Adrenal gland (tissue), 19 donors: ENCODE measurements at regions of chr13 and their contacts with region 1.

Region 1: DNA sequence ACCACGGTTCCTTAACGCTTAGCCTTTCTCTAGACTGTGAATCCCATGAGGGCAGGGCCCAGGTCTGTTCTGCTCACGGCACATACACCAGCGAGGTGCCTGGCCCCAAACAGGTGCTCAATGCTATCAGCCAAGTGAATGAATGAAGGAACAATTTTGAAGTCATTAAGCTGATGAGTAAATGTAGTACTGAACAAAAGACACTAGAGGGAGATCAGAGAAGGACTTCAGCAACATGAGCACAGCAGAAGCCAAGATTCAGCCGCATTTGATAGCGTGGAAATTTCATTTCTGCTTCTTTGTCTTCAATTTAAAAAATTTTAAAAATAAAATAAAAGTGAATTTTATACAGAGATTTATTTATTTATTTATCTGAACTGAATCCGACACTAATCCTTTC is 20.1 kb upstream of the MYO16 start:
- DNase-seq: no peak
- H3K4me3 ChIP-seq: no peak overlapping the region
- H3K27ac ChIP-seq: no peak overlapping the region
- H3K4me1 ChIP-seq: peaks cover 0 to 3% of the 10 kb centered on the region in 2 donors
- H3K27me3 ChIP-seq: no peaks in the 10 kb centered on the region
- CTCF ChIP-seq: peak in 2 of 6 experiments; percentile 19 to 23
- POLR2A ChIP-seq: no peak

Region 2: DNA sequence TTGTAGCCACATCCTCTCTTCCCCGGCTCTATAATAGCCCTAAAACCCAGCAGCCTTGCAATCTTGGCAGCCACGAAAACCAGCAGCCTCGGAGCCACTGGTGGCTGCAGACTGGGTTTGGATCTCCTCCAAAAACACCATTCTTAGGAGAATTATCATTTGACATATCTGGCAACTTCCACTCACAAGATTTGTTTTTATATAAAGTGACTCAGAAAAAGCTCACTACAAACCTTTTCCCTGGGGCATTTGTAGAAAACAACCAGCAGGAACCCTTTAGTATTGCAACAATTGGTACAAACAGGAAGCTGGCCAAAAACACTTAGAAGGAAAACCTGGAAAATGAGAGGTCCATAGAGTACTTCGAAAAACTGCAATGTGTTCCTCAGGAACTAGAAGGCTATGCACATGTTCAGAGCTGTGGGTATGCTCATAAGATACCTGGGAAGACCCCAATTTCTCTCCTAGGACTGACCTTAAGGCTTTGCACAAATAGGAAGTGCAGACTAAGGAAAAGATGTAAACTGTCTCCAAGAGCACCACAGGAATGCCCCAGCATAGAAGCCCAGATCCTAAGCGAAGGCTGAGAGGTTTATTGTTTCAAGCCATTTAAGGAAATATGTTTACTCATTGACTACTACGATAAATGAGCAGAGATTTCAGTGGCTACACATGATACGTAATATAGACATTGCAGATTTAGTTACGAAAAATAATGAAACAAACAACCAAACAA is 91.2 kb after region 1 on chr13:
- intact Hi-C with region 1: no loop called
- DNase-seq: no peak
- H3K4me3 ChIP-seq: no peak overlapping the region
- H3K27ac ChIP-seq: no peak overlapping the region
- H3K4me1 ChIP-seq: no peaks in the 10 kb centered on the region
- H3K27me3 ChIP-seq: no peaks in the 10 kb centered on the region
- CTCF ChIP-seq: no peak
- POLR2A ChIP-seq: no peak

Region 3: DNA sequence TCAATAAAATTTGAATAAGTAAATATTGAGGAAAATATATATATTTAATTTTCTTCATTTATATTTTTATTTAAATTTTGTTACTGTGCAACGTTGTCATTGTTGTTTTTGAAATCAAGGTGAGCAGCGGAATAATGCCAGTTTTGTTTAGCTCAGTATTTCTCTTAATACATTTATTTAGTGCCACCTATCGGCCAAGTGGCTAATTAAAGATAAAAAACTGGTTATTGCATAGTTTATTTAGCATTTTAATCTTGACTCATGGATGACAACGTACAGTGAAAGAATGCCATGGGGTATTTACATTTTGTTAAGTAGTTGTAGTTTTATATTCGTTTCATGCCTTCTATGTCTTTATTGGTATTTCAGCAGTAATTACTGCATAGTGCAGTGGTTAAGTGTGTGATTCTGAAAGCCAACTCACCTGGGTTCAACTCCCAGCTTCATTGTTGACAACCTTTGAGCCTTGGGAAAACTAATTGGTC is 285.9 kb after region 1 on chr13:
- intact Hi-C with region 1: loop called in 1 of 2 experiments (anchors 10 kb)
- DNase-seq: no peak
- H3K4me3 ChIP-seq: no peak overlapping the region
- H3K27ac ChIP-seq: no peak overlapping the region
- H3K4me1 ChIP-seq: no peaks in the 10 kb centered on the region
- H3K27me3 ChIP-seq: no peaks in the 10 kb centered on the region
- CTCF ChIP-seq: peak; percentile 29 to 65 (median 49)
- POLR2A ChIP-seq: no peak